ENCODE measurements at regions of chr1 and their contacts with region 1.

Region 1: GRCh38 chr1:86872086-86872485 is 41.8 kb downstream of the SELENOF start:
- DNase-seq: no peak
- ATAC-seq: no peak
- H3K4me3 ChIP-seq: no peak overlapping the region
- H3K27ac ChIP-seq: no peak overlapping the region
- H3K4me1 ChIP-seq: no peaks in the 10 kb centered on the region
- H3K27me3 ChIP-seq: no peaks in the 10 kb centered on the region
- CTCF ChIP-seq: no peak

Region 2: GRCh38 chr1:86741947-86742572 is 130.0 kb before region 1 on chr1:
- CTCF ChIA-PET with region 1: no interaction called
- POLR2A ChIA-PET with region 1: no interaction called
- in situ Hi-C with region 1: no loop called
- intact Hi-C with region 1: no loop called
- DNase-seq: no peak
- ATAC-seq: no peak
- H3K4me3 ChIP-seq: no peak overlapping the region
- H3K27ac ChIP-seq: no peak overlapping the region
- H3K4me1 ChIP-seq: no peaks in the 10 kb centered on the region
- H3K27me3 ChIP-seq: no peaks in the 10 kb centered on the region
- CTCF ChIP-seq: peak; percentile 81

Region 3: GRCh38 chr1:86887479-86888162 is 15.5 kb after region 1 on chr1:
- CTCF ChIA-PET with region 1: interaction called, 12 read pairs
- POLR2A ChIA-PET with region 1: no interaction called
- in situ Hi-C with region 1: no loop called
- intact Hi-C with region 1: no loop called
- DNase-seq: no peak
- ATAC-seq: no peak
- H3K4me3 ChIP-seq: no peak overlapping the region
- H3K27ac ChIP-seq: no peak overlapping the region
- H3K4me1 ChIP-seq: no peaks in the 10 kb centered on the region
- H3K27me3 ChIP-seq: no peaks in the 10 kb centered on the region
- CTCF ChIP-seq: no peak

Measured in Panc1 (cell line).